Activated B cell treated with CpG ODN at 0.5 μM for 24 hours (primary cell): ENCODE measurements at regions of chr18 and their contacts with region 1.

Region 1: DNA sequence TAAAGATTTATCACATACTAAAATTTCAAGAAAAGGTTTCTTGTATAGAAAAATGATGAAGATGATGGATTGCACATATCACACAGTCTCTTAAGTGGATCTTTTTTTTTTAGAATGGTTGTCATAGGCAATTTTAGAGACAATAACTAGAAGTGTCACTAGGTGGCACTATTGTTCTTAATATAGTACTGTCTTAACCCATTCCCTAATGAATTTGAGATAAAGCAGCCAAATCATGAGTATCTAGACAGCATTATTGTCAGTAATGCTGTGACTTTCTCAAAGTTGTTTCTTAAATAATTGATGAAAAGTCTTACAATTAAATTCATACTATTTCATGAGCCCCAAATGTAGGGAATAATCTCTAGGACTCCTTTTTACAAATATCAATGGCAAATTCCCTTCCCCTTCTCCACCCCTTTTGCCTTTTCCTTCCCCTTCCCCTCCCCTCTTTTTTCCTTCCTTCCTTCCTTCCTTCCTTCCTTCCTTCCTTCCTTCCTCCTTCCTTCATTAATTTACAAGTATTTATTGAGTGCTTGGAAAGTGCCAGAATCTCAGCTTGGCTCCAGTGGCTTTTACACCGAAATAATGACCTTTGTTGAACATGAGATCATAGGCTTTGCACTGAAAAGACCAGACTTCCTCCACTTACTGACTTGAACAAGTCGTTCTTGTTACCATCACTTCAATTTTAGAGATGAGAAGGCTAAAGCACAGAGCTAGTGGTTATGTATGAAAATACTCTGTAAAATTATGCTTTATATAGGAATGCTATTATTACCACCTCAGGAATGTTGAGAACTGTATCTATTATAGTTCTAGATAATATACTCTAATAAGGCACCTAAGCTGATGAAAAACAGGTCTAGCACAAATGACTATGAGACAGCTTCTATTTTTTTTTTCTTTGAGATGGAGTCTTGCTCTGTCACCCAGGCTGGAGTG is 19.8 kb downstream of the MYL12B start:
- DNase-seq: no peak
- ATAC-seq: peak; percentile 39
- H3K4me3 Mint-ChIP-seq: no peak overlapping the region
- H3K27ac Mint-ChIP-seq: no peak overlapping the region
- H3K4me1 Mint-ChIP-seq: peaks cover 41% of the 10 kb centered on the region
- H3K27me3 Mint-ChIP-seq: no peaks in the 10 kb centered on the region
- CTCF ChIP-seq: peak; percentile 49

Region 2: GRCh38 chr18:3012964-3013804 is 268.5 kb before region 1 on chr18 and contains the start of gene LPIN2:
- CTCF ChIA-PET with region 1: no interaction called
- POLR2A ChIA-PET with region 1: interaction called, 14 read pairs
- intact Hi-C with region 1: no loop called
- DNase-seq: peak; percentile 91
- ATAC-seq: peak; percentile 86
- H3K4me3 Mint-ChIP-seq: peak within 1 kb of the TSS; percentile 95
- H3K27ac Mint-ChIP-seq: peak within 1 kb of the TSS; percentile 88
- H3K4me1 Mint-ChIP-seq: peaks cover 59% of the 10 kb centered on the region
- H3K27me3 Mint-ChIP-seq: no peaks in the 10 kb centered on the region
- CTCF ChIP-seq: no peak
- total RNA-seq, gene LPIN2: 21.8 and 24.4 TPM in 2 replicates

Region 3: DNA sequence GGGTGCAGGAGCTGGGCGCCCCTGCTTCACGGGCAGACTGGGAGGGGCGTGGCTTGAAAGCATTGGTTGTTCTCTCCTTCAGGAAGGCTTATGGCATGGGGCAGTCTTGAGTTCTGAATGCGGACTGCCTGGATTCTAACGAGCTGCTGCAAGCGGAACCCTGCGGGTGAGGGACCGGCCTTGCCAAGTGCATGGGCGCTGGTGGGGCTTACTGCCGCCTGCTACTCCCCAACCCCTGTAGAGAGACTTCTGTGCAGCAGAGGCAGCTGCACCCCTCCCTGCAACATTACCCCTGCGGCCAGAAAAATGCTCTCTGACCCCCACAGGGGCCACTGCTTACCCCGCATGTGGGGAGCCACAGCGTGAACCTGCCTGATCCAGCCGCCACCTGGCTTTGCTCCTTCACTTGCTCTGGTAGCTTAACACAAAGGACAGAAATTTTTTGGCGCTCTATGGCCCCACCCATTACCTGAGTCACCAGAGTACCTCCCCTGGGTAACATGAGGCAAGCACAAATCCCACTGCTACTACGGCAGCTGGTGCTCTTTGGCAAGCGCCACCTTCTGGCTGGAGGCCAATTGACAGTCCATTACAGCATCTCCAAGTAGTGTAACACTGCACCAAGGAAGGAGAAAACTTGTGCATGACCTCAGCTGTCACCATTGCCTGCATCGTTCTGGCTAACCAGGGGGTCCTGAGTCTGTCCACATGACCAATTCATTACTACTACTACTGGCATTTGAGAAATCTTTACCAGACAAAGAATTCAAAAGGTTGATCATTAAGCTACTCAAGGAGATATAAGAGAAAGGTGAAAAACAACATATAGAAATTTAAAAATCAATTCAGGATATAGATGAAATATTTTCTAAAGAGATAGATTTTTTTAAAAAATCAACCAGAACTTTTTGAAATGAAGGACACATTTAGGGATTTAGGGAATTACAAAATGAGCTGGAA is 15.6 kb after region 1 on chr18:
- CTCF ChIA-PET with region 1: interaction called, 7 read pairs
- POLR2A ChIA-PET with region 1: interaction called, 7 read pairs
- intact Hi-C with region 1: loop called (anchors 1 kb)
- DNase-seq: peak; percentile 82
- ATAC-seq: peak; percentile 99
- H3K4me3 Mint-ChIP-seq: peak overlapping the region; percentile 95
- H3K27ac Mint-ChIP-seq: peak overlapping the region; percentile 83
- H3K4me1 Mint-ChIP-seq: peaks cover 11% of the 10 kb centered on the region
- H3K27me3 Mint-ChIP-seq: peaks cover 6% of the 10 kb centered on the region
- CTCF ChIP-seq: no peak

Region 4: DNA sequence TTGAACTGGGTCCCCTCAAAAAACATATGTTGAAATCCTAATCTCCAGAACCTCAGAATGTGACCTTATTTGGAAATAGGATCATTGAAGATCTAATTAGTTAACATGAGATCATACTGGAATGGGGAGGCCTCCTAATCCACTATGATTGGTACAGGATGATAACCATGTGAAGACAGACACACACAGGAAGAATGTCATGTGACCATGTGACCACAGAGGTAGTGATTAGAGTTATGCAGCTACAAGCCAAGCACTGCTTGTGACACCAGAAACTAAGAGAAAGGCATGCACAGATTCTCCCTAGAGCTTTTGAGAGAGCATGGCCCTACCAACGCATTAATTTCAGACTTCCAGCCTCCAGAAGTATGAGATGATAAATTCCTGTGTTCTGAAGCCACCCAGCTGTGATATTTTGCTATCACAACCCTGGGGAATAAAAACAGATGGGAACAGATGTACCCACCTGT is 121.3 kb after region 1 on chr18:
- CTCF ChIA-PET with region 1: no interaction called
- POLR2A ChIA-PET with region 1: no interaction called
- intact Hi-C with region 1: loop called (anchors 1 kb)
- DNase-seq: no peak
- ATAC-seq: peak; percentile 20
- H3K4me3 Mint-ChIP-seq: peak overlapping the region; percentile 15
- H3K27ac Mint-ChIP-seq: peak overlapping the region; percentile 94
- H3K4me1 Mint-ChIP-seq: peaks cover 60% of the 10 kb centered on the region
- H3K27me3 Mint-ChIP-seq: no peaks in the 10 kb centered on the region
- CTCF ChIP-seq: no peak

Region 5: DNA sequence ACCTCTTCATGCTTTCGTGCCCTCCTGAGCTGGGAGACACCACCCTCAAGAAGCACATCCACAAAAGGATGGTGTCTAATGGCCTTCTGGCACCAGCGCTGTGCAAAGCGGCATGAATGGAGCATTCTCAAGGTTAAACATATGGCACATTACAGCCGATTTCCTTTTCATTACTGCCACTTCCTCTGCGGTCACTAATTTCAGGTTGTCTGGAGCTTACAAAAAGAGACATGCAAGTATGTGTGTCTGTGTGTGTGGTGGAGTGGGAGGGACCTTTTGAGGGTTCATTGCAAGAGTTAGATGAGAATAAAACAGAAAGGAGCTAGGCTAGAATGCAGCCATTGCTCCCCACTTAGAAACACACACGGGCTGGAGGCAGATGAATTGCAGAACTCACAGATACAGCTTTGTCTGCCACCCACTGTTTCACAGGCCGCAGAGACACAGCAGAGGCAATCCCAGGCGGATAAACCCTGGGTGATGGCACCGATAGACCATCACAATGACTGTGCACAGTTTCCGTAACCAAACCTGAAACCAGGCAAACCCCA is 244.2 kb after region 1 on chr18:
- CTCF ChIA-PET with region 1: no interaction called
- POLR2A ChIA-PET with region 1: interaction called, 10 read pairs
- intact Hi-C with region 1: no loop called
- DNase-seq: no peak
- ATAC-seq: peak; percentile 78
- H3K4me3 Mint-ChIP-seq: peak overlapping the region; percentile 62
- H3K27ac Mint-ChIP-seq: peak overlapping the region; percentile 20
- H3K4me1 Mint-ChIP-seq: peaks cover 18% of the 10 kb centered on the region
- H3K27me3 Mint-ChIP-seq: no peaks in the 10 kb centered on the region
- CTCF ChIP-seq: no peak

Region 6: GRCh38 chr18:3660739-3661515 is 379.2 kb after region 1 on chr18:
- CTCF ChIA-PET with region 1: interaction called, 239 read pairs
- POLR2A ChIA-PET with region 1: interaction called, 15 read pairs
- intact Hi-C with region 1: loop called (anchors 1 kb)
- DNase-seq: no peak
- ATAC-seq: peak; percentile 71
- H3K4me3 Mint-ChIP-seq: peak overlapping the region; percentile 56
- H3K27ac Mint-ChIP-seq: peak overlapping the region; percentile 69
- H3K4me1 Mint-ChIP-seq: peaks cover 28% of the 10 kb centered on the region
- H3K27me3 Mint-ChIP-seq: no peaks in the 10 kb centered on the region
- CTCF ChIP-seq: no peak

Region 7: DNA sequence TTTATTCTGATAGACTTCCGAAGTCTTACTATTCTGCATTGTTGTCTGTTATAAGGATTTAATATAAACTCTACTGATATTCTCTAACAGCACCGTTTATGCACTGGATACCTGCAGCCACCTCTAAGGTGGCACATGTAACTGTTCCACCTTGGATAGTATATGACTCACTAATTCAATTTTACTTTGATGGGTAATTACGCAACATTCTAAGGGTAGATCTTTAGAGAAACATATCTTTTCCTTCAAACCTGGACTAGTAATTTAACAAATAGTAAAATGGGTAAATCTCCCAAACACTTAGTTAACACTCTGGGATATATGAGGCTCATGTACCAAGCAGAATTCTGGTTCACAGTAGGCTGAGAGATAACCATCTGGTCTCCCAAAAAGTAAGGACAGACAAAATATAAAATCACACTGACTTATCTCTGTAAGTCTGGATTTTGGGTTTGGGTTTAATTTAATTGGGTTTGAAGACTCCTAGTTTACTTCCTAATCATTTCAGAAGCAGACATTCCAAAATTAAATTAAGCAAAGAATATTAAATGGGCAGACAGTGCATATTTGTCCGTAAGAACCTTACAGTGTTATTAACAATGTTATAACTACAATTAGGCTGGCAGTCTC is 583.1 kb after region 1 on chr18:
- CTCF ChIA-PET with region 1: no interaction called
- POLR2A ChIA-PET with region 1: no interaction called
- intact Hi-C with region 1: loop called (anchors 2 kb)
- DNase-seq: no peak
- ATAC-seq: no peak
- H3K4me3 Mint-ChIP-seq: no peak overlapping the region
- H3K27ac Mint-ChIP-seq: no peak overlapping the region
- H3K4me1 Mint-ChIP-seq: no peaks in the 10 kb centered on the region
- H3K27me3 Mint-ChIP-seq: no peaks in the 10 kb centered on the region
- CTCF ChIP-seq: no peak